Common myeloid progenitor, CD34-positive (primary cell): ENCODE measurements at regions of chr3 and their contacts with region 1.

Region 1: GRCh38 chr3:186806089-186807055 is at the start of gene RFC4:
- DNase-seq: peak; percentile 66 to 84 (median 77)
- H3K4me3 ChIP-seq: peak within 1 kb of the TSS; percentile 64 to 98 (median 91)
- H3K27ac ChIP-seq: peak within 1 kb of the TSS; percentile 55 to 91
- H3K4me1 ChIP-seq: peaks cover 7 to 22% (median 19%) of the 10 kb centered on the region in 4 experiments
- H3K27me3 ChIP-seq: no peaks in the 10 kb centered on the region

Region 2: DNA sequence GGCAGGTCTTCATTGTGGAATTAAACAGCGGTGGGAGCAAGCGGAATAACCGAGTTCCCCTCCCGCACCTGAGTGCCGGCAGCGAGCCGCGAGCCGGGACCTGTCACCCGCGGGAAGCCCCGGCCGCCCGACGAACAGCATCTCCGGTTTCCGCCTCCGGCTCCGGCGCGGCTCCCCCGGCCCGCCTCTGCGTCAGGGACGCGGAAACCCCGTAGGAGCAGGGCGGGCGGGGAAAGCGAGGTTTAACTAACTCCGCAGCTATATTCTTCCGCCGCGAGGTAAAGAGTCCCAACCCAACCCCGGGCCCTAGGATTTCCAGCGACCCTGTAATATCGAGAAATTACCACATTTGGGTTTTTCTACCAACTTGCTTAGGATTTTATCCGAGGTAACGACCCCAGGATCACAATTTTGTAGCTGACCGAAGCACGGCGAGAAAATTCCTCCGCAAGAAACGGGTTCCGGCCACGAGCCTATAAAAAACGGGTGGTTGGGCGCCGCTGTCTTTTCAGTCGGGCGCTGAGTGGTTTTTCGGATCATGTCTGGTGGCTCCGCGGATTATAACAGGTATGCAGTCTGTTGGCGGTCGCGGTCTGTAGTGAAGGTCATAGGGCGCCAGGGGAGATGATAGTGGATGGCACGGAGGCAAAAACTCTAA is 23.2 kb before region 1 on chr3 and contains the start of gene EIF4A2:
- CTCF ChIA-PET with region 1: interaction called, 3 read pairs
- POLR2A ChIA-PET with region 1: interaction called, 16 read pairs
- DNase-seq: peak; percentile 92 to 94 (median 94)
- H3K4me3 ChIP-seq: peak within 1 kb of the TSS; percentile 93 to 100 (median 97)
- H3K27ac ChIP-seq: peak within 1 kb of the TSS; percentile 97 to 98
- H3K4me1 ChIP-seq: peaks cover 18 to 38% (median 32%) of the 10 kb centered on the region in 4 experiments
- H3K27me3 ChIP-seq: no peaks in the 10 kb centered on the region

Region 3: GRCh38 chr3:186821429-186822367 is 15.3 kb after region 1 on chr3:
- CTCF ChIA-PET with region 1: interaction called, 16 read pairs
- POLR2A ChIA-PET with region 1: interaction called, 4 read pairs
- DNase-seq: peak; percentile 64 to 79 (median 67)
- H3K4me3 ChIP-seq: no peak overlapping the region
- H3K27ac ChIP-seq: no peak overlapping the region
- H3K4me1 ChIP-seq: peaks cover 0 to 22% (median 19%) of the 10 kb centered on the region in 4 experiments
- H3K27me3 ChIP-seq: peaks cover 4 to 33% (median 17%) of the 10 kb centered on the region in 5 experiments

Region 4: DNA sequence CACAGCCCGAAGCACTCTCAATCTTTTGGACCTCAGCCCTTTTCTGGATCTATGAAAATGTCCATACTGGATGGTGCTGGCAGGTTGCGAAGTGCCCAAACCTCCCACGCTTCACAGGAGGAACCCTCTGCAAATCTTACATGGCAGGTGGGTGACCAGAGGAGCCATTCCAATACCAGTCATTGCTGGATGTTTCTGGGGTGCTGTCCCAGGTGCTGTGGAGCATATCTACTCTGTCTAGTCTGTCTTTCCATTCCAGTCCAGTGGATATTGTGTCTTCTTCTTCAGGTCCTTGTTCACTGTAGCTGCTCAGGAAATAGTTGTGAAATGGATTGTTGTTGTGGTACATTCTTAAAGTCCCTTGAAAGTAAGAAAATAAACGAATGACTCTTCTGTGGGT is 25.4 kb after region 1 on chr3:
- CTCF ChIA-PET with region 1: no interaction called
- POLR2A ChIA-PET with region 1: no interaction called
- DNase-seq: no peak
- H3K4me3 ChIP-seq: no peak overlapping the region
- H3K27ac ChIP-seq: no peak overlapping the region
- H3K4me1 ChIP-seq: peaks cover 0 to 10% (median 8%) of the 10 kb centered on the region in 4 experiments
- H3K27me3 ChIP-seq: peaks cover 19 to 48% (median 31%) of the 10 kb centered on the region in 5 experiments